ENCODE measurements at regions of chr20 and their contacts with region 1.

Region 1: DNA sequence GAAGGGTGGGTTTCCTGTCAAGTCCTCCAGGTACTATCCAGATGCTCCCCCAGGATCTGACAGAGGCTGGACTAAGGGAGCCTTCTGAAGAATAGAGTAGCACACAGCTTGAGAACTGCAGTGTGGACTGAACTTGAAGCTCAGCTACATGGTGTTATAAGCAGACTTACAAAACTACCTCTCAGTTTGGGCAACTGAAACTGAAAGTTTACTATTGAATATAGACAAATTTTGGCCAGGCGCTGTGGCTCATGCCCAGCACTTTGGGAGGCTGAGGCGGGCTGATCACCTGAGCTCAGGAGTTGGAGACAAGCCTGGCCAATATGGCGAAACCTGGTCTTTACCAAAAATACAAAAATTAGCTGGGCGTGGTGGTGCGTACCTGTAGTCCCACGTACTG is 348.5 kb downstream of the PLCB1 start:
- DNase-seq: no peak
- ATAC-seq: no peak
- H3K4me3 ChIP-seq: no peak overlapping the region
- H3K4me3 Mint-ChIP-seq: no peak overlapping the region
- H3K27ac ChIP-seq: no peak overlapping the region
- H3K27ac Mint-ChIP-seq: no peak overlapping the region
- H3K4me1 ChIP-seq: no peaks in the 10 kb centered on the region
- H3K4me1 Mint-ChIP-seq: no peaks in the 10 kb centered on the region
- H3K27me3 ChIP-seq: no peaks in the 10 kb centered on the region
- H3K27me3 Mint-ChIP-seq: no peaks in the 10 kb centered on the region
- CTCF ChIP-seq: no peak

Region 2: DNA sequence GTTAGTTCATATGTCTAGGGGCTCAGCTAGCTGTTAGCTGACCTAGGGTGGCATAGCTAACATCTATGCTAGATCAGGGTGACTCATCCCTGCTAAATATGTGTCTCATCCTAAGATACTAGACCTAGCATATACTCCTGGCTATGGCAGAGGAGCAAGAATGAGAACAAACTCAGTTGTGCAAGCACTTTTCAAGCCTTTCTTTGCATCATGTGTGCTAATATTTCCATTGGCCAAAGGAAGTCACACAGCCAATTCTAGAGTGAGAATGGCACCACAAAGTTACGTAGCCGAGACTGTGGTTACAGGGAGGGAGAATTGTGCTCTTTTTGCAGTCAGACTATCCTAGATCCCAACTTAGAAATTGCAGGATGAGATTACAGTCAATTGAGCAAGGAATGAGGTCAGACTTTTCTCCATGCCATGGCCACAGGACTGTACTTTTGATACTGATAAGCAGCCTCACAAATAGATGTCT is 667.0 kb after region 1 on chr20:
- CTCF ChIA-PET with region 1: no interaction called
- POLR2A ChIA-PET with region 1: no interaction called
- intact Hi-C with region 1: loop called in 1 of 2 experiments (anchors 5 kb)
- DNase-seq: no peak
- ATAC-seq: no peak
- H3K4me3 ChIP-seq: no peak overlapping the region
- H3K4me3 Mint-ChIP-seq: no peak overlapping the region
- H3K27ac ChIP-seq: no peak overlapping the region
- H3K27ac Mint-ChIP-seq: no peak overlapping the region
- H3K4me1 ChIP-seq: no peaks in the 10 kb centered on the region
- H3K4me1 Mint-ChIP-seq: no peaks in the 10 kb centered on the region
- H3K27me3 ChIP-seq: no peaks in the 10 kb centered on the region
- H3K27me3 Mint-ChIP-seq: no peaks in the 10 kb centered on the region
- CTCF ChIP-seq: no peak